GM12878 (cell line): ENCODE measurements at regions of chr19 and their contacts with region 1.

Region 1: DNA sequence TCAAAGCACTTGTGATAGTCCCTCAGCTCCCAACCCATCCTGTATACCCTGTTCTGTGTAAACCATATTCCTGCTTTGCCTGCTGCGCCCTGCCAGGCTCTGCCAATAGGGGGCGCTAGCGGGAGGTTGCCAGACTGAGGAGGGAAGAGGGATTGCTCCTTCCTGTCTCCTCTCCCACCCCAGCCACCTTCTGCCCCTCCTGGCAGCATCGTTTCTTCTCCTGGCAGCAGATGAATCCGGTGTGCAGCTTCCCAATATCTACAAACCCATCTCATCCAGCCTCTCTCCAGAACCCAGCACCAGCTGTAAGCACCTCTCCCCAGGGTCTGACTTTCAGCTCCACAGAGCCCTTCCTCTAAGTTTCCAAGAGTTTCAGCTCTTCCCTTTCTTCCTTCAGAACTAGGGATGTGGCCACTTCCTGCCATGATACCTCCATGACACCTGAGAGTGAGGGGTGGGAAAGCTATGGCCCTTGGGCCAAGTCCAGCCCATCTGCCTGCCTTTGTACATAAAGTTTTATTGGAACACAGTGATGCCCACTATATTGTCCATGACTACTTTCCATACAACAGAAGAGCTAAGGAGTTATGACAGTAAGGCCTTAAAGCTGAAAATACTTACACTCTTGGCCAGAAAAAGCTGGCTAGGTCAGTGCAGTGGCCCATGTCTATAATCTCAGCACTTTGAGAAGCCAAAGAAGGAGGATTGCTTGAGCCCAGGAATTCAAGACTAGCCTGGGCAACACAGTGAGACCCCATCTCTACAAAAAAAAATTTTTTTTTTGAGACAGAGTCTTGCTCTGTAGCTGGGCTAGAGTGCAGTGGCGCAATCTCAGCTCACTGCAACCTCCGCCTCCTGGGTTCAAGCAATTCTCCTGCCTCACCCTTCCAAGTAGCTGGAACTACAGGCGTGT is 34.5 kb upstream of the ATP1A3 start:
- DNase-seq: no peak
- ATAC-seq: no peak
- H3K4me3 ChIP-seq: no peak overlapping the region
- H3K27ac ChIP-seq: no peak overlapping the region
- H3K4me1 ChIP-seq: no peaks in the 10 kb centered on the region
- H3K27me3 ChIP-seq: peaks cover 0 to 2% of the 10 kb centered on the region in 2 experiments; a peak in 2 of 4 replicates
- CTCF ChIP-seq: peak; percentile 41 to 74 (median 64); a peak in 5 of 6 replicates
- EP300 ChIP-seq: no peak
- POLR2A ChIP-seq: no peak
- RAD21 ChIP-seq: no peak

Region 2: DNA sequence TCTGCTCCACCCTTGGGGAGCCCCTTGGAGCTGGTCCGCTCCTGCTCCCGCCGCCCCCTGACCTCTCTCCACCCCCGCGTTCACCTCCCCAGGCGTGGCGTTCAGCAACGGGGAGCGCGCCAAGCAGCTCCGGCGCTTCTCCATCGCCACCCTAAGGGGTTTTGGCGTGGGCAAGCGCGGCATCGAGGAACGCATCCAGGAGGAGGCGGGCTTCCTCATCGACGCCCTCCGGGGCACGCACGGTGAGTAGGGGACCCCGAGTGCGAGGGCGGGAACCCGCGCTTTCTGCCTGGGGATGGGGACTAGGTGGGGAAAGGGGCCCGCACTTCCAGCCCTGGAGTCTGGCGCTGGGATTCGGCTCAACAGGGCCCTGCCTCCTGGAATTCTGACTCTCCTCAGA is 938.6 kb before region 1 on chr19:
- CTCF ChIA-PET with region 1: no interaction called
- POLR2A ChIA-PET with region 1: no interaction called
- RAD21 ChIA-PET with region 1: no interaction called
- SMC1A ChIA-PET with region 1: no interaction called
- in situ Hi-C with region 1: no loop called
- intact Hi-C with region 1: no loop called
- DNase-seq: no peak
- ATAC-seq: no peak
- H3K4me3 ChIP-seq: no peak overlapping the region
- H3K27ac ChIP-seq: no peak overlapping the region
- H3K4me1 ChIP-seq: no peaks in the 10 kb centered on the region
- H3K27me3 ChIP-seq: no peaks in the 10 kb centered on the region
- CTCF ChIP-seq: no peak
- EP300 ChIP-seq: no peak
- POLR2A ChIP-seq: no peak
- RAD21 ChIP-seq: no peak

Region 3: GRCh38 chr19:41688098-41688497 is 340.5 kb before region 1 on chr19 and contains the start of gene CEACAM7:
- CTCF ChIA-PET with region 1: no interaction called
- POLR2A ChIA-PET with region 1: no interaction called
- RAD21 ChIA-PET with region 1: no interaction called
- SMC1A ChIA-PET with region 1: no interaction called
- in situ Hi-C with region 1: no loop called
- intact Hi-C with region 1: no loop called
- DNase-seq: no peak
- ATAC-seq: no peak
- H3K4me3 ChIP-seq: no peak within 1 kb of the TSS
- H3K27ac ChIP-seq: no peak within 1 kb of the TSS
- H3K4me1 ChIP-seq: no peaks in the 10 kb centered on the region
- H3K27me3 ChIP-seq: no peaks in the 10 kb centered on the region
- CTCF ChIP-seq: no peak
- EP300 ChIP-seq: no peak
- POLR2A ChIP-seq: no peak
- RAD21 ChIP-seq: no peak
- polyA plus RNA-seq, gene CEACAM7: not detected

Region 4: GRCh38 chr19:41887711-41888382 is 140.7 kb before region 1 on chr19:
- CTCF ChIA-PET with region 1: no interaction called
- POLR2A ChIA-PET with region 1: no interaction called
- RAD21 ChIA-PET with region 1: no interaction called
- SMC1A ChIA-PET with region 1: no interaction called
- in situ Hi-C with region 1: no loop called
- intact Hi-C with region 1: no loop called
- DNase-seq: no peak
- ATAC-seq: peak; percentile 36
- H3K4me3 ChIP-seq: peak overlapping the region; percentile 70
- H3K27ac ChIP-seq: peak overlapping the region; percentile 95
- H3K4me1 ChIP-seq: peaks cover 30% of the 10 kb centered on the region
- H3K27me3 ChIP-seq: no peaks in the 10 kb centered on the region
- CTCF ChIP-seq: peak; percentile 42 to 62 (median 52); a peak in 5 of 6 replicates
- EP300 ChIP-seq: peak in 1 of 2 experiments; percentile 18; a peak in 1 of 4 replicates
- POLR2A ChIP-seq: peak; percentile 58
- RAD21 ChIP-seq: peak; percentile 64

Region 5: DNA sequence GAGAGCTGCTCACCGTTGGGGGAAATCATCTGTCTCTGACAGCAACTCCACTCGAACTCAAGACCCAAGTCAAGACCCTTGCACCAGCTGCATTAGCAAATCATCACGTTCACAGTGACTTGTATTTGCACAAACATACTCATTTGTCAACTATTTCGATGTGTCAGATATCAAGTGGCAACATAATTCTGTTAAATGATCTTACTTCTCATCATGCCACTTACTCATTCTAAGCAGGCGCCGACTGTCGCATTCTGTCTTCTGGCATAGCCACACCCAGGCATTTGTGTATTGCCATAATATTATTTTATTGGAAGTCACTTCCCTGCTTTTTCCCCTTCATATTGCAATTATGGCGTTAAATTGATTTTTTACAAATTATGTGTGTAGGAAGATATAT is 11.5 kb before region 1 on chr19:
- CTCF ChIA-PET with region 1: interaction called, 18 read pairs
- POLR2A ChIA-PET with region 1: no interaction called
- RAD21 ChIA-PET with region 1: no interaction called
- SMC1A ChIA-PET with region 1: no interaction called
- in situ Hi-C with region 1: no loop called
- intact Hi-C with region 1: no loop called
- DNase-seq: no peak
- ATAC-seq: no peak
- H3K4me3 ChIP-seq: no peak overlapping the region
- H3K27ac ChIP-seq: no peak overlapping the region
- H3K4me1 ChIP-seq: no peaks in the 10 kb centered on the region
- H3K27me3 ChIP-seq: peaks cover 0 to 2% of the 10 kb centered on the region in 2 experiments; a peak in 1 of 4 replicates
- CTCF ChIP-seq: no peak
- EP300 ChIP-seq: no peak
- POLR2A ChIP-seq: no peak
- RAD21 ChIP-seq: no peak

Region 6: DNA sequence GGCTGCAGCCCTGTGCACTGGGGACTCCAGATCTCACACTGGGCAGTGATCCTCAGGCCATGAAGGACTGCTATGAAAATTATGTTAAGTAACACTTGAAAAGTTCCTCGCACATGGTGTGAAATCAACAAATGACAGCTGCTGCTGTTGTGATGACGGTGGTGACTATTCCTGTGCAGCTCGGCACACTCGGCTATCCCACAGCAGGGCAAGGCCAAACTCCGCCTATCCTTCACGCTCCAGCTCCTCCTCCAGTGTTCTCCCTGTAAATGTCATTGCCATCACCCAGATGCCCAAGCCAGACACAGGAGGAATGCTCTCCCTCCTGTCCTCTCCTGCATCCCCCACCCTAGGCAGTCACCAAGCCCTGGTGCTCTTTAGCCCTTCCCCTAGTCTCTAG is 10.1 kb after region 1 on chr19:
- CTCF ChIA-PET with region 1: interaction called, 15 read pairs
- POLR2A ChIA-PET with region 1: no interaction called
- RAD21 ChIA-PET with region 1: no interaction called
- SMC1A ChIA-PET with region 1: no interaction called
- in situ Hi-C with region 1: no loop called
- intact Hi-C with region 1: no loop called
- DNase-seq: no peak
- ATAC-seq: no peak
- H3K4me3 ChIP-seq: no peak overlapping the region
- H3K27ac ChIP-seq: no peak overlapping the region
- H3K4me1 ChIP-seq: no peaks in the 10 kb centered on the region
- H3K27me3 ChIP-seq: no peaks in the 10 kb centered on the region
- CTCF ChIP-seq: no peak
- EP300 ChIP-seq: no peak
- POLR2A ChIP-seq: no peak
- RAD21 ChIP-seq: no peak

Region 7: DNA sequence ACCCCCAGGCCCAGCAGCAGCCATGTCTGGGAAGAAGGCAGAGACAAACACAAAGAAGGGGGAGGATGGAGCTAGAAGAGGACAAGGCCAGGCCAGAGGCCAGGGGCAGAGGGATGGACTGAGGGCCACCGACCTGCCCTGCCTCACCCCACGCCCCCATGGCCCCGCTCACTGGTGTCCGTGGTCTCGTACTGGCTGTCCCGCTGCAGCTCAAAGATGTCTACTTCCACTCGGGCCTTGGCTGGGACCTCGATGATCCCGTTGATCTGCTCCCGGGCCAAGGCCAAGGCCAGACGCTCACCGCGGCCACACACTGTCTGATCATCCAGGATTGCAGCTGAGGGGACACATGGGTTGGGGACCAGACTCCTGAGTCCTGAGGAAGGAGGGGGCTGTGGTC is 36.5 kb after region 1 on chr19:
- CTCF ChIA-PET with region 1: no interaction called
- POLR2A ChIA-PET with region 1: no interaction called
- RAD21 ChIA-PET with region 1: no interaction called
- SMC1A ChIA-PET with region 1: no interaction called
- in situ Hi-C with region 1: no loop called
- intact Hi-C with region 1: no loop called
- DNase-seq: no peak
- ATAC-seq: no peak
- H3K4me3 ChIP-seq: no peak overlapping the region
- H3K27ac ChIP-seq: no peak overlapping the region
- H3K4me1 ChIP-seq: no peaks in the 10 kb centered on the region
- H3K27me3 ChIP-seq: peaks cover 14 to 15% of the 10 kb centered on the region in 2 experiments
- CTCF ChIP-seq: no peak
- EP300 ChIP-seq: no peak
- POLR2A ChIP-seq: no peak
- RAD21 ChIP-seq: no peak